ENCODE measurements at regions of chr1 and their contacts with region 1.

Region 1: DNA sequence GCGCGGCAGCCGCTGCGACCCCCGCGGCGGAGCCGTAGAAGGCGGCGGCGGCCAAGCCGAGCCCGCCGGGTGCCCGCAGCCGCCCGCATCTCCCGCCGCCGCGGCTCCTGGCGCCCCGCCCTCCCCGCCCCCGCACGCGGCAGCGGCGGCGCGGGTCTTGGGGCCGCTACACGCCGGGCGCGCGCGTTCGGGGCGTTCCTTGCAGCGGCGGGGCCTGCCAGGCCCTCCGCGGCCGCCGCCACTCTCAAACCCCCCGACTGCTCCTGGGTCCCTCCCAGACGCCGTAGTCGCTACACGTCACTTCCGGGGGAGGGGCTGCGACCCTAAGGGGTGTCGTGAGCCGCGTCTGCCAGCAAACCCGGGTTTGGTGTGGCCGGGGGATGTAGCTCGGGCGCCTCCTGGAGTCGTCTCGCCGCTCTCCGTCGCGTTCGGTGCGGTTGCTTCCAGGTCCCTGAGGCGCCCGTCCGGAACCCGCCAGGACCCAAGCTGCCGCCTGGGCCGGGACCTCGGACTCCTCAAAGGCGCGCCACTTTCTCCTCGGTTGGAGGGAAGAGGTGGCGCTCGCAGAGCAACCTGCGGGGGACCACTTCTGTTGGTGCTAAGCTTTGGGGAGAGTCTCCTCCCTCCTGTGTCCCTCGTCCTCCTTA is at the start of gene ELK4:
- DNase-seq: peak; percentile 99
- H3K4me3 ChIP-seq: peak within 1 kb of the TSS; percentile 72 to 87
- H3K4me3 Mint-ChIP-seq: peak within 1 kb of the TSS; percentile 92 to 99 (median 96)
- H3K27ac ChIP-seq: peak within 1 kb of the TSS; percentile 83
- H3K27ac Mint-ChIP-seq: peak within 1 kb of the TSS; percentile 92 to 99 (median 98)
- H3K4me1 ChIP-seq: peaks cover 47% of the 10 kb centered on the region
- H3K4me1 Mint-ChIP-seq: peaks cover 23 to 50% (median 38%) of the 10 kb centered on the region in 4 donors
- H3K27me3 ChIP-seq: no peaks in the 10 kb centered on the region
- H3K27me3 Mint-ChIP-seq: no peaks in the 10 kb centered on the region
- total RNA-seq, gene ELK4: 166 to 194 TPM

Region 2: DNA sequence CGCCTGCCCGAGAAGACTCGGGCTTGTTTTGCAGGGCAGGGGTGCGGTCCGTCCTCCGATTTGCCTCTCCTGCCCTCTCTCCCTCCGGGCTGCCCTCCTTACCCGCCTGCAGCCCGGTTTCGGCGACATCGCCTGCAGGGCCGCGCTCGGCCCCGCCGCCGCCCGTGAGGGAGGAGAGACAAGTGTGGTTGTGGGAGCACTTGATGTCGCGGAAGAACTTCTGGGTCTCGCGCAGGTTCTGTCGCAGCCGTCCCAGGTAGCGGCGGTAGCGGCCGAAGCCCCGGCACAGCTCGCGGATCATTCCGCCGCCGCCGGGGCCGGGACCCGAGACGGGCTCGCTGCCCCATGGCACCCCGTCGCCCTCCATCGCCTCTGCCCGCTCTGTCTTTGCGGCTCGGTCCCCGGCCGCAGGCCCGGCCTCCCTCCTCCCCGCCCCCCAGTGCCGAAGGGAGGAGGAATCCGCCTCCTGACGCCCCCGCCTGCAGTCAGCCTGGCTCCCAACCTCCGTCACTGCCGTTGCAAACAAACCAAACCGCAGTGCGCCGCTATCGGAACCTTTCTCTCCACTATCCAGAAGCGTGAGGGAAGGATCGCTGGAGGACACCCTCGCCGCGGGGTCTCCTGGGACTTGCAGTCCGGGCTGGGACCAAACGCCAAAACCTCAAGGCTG is 420.5 kb before region 1 on chr1 and contains the start of gene DSTYK:
- CTCF ChIA-PET with region 1: no interaction called
- POLR2A ChIA-PET with region 1: no interaction called
- intact Hi-C with region 1: loop called (anchors 5 kb)
- DNase-seq: peak; percentile 91 to 94 (median 93)
- H3K4me3 ChIP-seq: peak within 1 kb of the TSS; percentile 67 to 82
- H3K4me3 Mint-ChIP-seq: peak within 1 kb of the TSS; percentile 89 to 98 (median 96)
- H3K27ac ChIP-seq: peak within 1 kb of the TSS; percentile 80
- H3K27ac Mint-ChIP-seq: peak within 1 kb of the TSS; percentile 96 to 99 (median 97)
- H3K4me1 ChIP-seq: peaks cover 29% of the 10 kb centered on the region
- H3K4me1 Mint-ChIP-seq: peaks cover 22 to 48% (median 34%) of the 10 kb centered on the region in 4 donors
- H3K27me3 ChIP-seq: no peaks in the 10 kb centered on the region
- H3K27me3 Mint-ChIP-seq: peaks cover 0 to 5% of the 10 kb centered on the region in 2 donors
- total RNA-seq, gene DSTYK: 16.4 to 16.6 TPM

Region 3: GRCh38 chr1:205523891-205524793 is 107.7 kb before region 1 on chr1:
- CTCF ChIA-PET with region 1: interaction called, 12 read pairs
- POLR2A ChIA-PET with region 1: interaction called, 13 read pairs
- intact Hi-C with region 1: loop called (anchors 1 kb)
- DNase-seq: peak in 4 of 5 donors; percentile 61 to 64 (median 63)
- H3K4me3 ChIP-seq: no peak overlapping the region
- H3K4me3 Mint-ChIP-seq: no peak overlapping the region
- H3K27ac ChIP-seq: no peak overlapping the region
- H3K27ac Mint-ChIP-seq: no peak overlapping the region
- H3K4me1 ChIP-seq: no peaks in the 10 kb centered on the region
- H3K4me1 Mint-ChIP-seq: no peaks in the 10 kb centered on the region
- H3K27me3 ChIP-seq: no peaks in the 10 kb centered on the region
- H3K27me3 Mint-ChIP-seq: peaks cover 0 to 3% of the 10 kb centered on the region in 2 donors

Region 4: DNA sequence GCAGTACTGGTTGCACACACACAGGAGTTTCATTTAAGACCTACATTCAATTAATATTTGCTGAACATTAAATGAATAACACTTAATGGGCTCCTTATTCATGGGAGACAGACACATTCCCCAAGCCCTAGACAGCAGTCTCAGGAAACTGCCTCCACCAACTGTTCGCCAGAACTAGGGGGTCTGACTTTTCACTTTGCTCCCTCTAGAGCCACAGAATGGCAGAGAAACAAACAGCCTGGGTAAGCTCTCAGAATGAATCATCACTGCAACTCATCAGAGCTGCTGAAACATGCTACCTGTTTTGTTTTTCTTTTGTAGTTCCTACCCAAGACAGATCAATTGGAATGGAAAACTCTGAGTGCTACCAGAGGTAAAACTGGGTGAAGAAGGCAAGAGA is 31.8 kb before region 1 on chr1:
- CTCF ChIA-PET with region 1: interaction called, 333 read pairs
- POLR2A ChIA-PET with region 1: interaction called, 189 read pairs
- intact Hi-C with region 1: no loop called
- DNase-seq: no peak
- H3K4me3 ChIP-seq: no peak overlapping the region
- H3K4me3 Mint-ChIP-seq: no peak overlapping the region
- H3K27ac ChIP-seq: no peak overlapping the region
- H3K27ac Mint-ChIP-seq: peak overlapping the region in 3 of 7 donors; percentile 37 to 80 (median 59)
- H3K4me1 ChIP-seq: no peaks in the 10 kb centered on the region
- H3K4me1 Mint-ChIP-seq: peaks cover 10 to 15% (median 14%) of the 10 kb centered on the region in 4 donors
- H3K27me3 ChIP-seq: no peaks in the 10 kb centered on the region
- H3K27me3 Mint-ChIP-seq: no peaks in the 10 kb centered on the region

Region 5: GRCh38 chr1:205763980-205764379 is 132.1 kb after region 1 on chr1:
- CTCF ChIA-PET with region 1: no interaction called
- POLR2A ChIA-PET with region 1: no interaction called
- intact Hi-C with region 1: no loop called
- DNase-seq: no peak
- H3K4me3 ChIP-seq: no peak overlapping the region
- H3K4me3 Mint-ChIP-seq: no peak overlapping the region
- H3K27ac ChIP-seq: no peak overlapping the region
- H3K27ac Mint-ChIP-seq: no peak overlapping the region
- H3K4me1 ChIP-seq: no peaks in the 10 kb centered on the region
- H3K4me1 Mint-ChIP-seq: peaks cover 1 to 7% (median 5%) of the 10 kb centered on the region in 4 donors
- H3K27me3 ChIP-seq: no peaks in the 10 kb centered on the region
- H3K27me3 Mint-ChIP-seq: no peaks in the 10 kb centered on the region

Region 6: DNA sequence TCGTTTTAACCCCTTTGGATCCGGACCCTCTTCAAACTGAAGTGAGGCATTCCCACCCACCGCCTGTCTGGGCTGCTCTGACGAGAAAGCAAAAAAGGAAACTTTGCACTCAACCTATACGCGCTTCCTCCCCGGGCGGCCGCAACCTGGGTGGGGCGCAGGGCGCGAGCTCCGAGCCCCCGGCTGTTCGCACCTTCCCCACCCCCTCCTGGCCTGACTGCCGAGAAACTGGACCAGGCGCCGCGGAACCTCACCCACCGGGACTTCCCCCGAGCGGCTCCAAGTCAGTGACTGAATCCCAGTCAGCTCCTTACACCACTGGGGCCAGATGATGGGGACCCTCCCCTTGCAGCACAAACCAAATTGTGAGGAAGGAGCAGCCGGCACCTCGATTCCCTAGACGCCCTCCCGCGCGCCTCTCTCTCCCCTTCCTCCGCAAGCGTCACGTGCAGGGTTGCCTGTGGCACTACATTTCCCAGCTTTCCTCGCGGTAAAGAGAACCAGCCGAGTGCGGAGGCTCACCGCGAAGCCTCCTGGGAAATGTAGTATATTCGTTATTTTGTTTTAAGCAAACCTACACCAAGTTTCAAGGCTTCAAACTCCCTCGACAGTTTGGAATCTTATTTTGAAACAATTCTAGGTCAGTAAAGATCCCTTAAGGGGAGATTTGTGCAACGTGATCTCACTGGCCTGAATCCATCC is 143.3 kb after region 1 on chr1 and contains the start of gene RAB29:
- CTCF ChIA-PET with region 1: interaction called, 3 read pairs
- POLR2A ChIA-PET with region 1: interaction called, 26 read pairs
- intact Hi-C with region 1: loop called (anchors 2 kb)
- DNase-seq: peak; percentile 88 to 94 (median 90)
- H3K4me3 ChIP-seq: peak within 1 kb of the TSS; percentile 59 to 77
- H3K4me3 Mint-ChIP-seq: peak within 1 kb of the TSS; percentile 91 to 100 (median 92)
- H3K27ac ChIP-seq: peak within 1 kb of the TSS; percentile 87
- H3K27ac Mint-ChIP-seq: peak within 1 kb of the TSS; percentile 92 to 98 (median 97)
- H3K4me1 ChIP-seq: peaks cover 43% of the 10 kb centered on the region
- H3K4me1 Mint-ChIP-seq: peaks cover 35 to 69% (median 48%) of the 10 kb centered on the region in 4 donors
- H3K27me3 ChIP-seq: no peaks in the 10 kb centered on the region
- H3K27me3 Mint-ChIP-seq: no peaks in the 10 kb centered on the region
- total RNA-seq, gene RAB29: 59.7 to 62.0 TPM

Measured in CD4-positive, alpha-beta memory T cell (primary cell).